Common myeloid progenitor, CD34-positive (primary cell): ENCODE measurements at regions of chr10 and their contacts with region 1.

Region 1: GRCh38 chr10:111076191-111076681 is 593 bp upstream of the ADRA2A start:
- DNase-seq: peak; percentile 64 to 85 (median 83)
- H3K4me3 ChIP-seq: peak overlapping the region; percentile 23 to 82 (median 63)
- H3K27ac ChIP-seq: no peak overlapping the region
- H3K4me1 ChIP-seq: peaks cover 0 to 30% (median 24%) of the 10 kb centered on the region in 4 experiments
- H3K27me3 ChIP-seq: peaks cover 6 to 43% (median 36%) of the 10 kb centered on the region in 5 experiments

Region 2: GRCh38 chr10:111063471-111063870 is 12.8 kb before region 1 on chr10:
- CTCF ChIA-PET with region 1: interaction called, 18 read pairs
- POLR2A ChIA-PET with region 1: no interaction called
- DNase-seq: no peak
- H3K4me3 ChIP-seq: no peak overlapping the region
- H3K27ac ChIP-seq: no peak overlapping the region
- H3K4me1 ChIP-seq: no peaks in the 10 kb centered on the region
- H3K27me3 ChIP-seq: peaks cover 0 to 8% (median 0%) of the 10 kb centered on the region in 5 experiments

Region 3: GRCh38 chr10:111128331-111129180 is 52.3 kb after region 1 on chr10:
- CTCF ChIA-PET with region 1: interaction called, 35 read pairs
- POLR2A ChIA-PET with region 1: interaction called, 4 read pairs
- DNase-seq: peak; percentile 78 to 93 (median 88)
- H3K4me3 ChIP-seq: no peak overlapping the region
- H3K27ac ChIP-seq: no peak overlapping the region
- H3K4me1 ChIP-seq: peaks cover 0 to 29% (median 6%) of the 10 kb centered on the region in 4 experiments
- H3K27me3 ChIP-seq: no peaks in the 10 kb centered on the region

Region 4: GRCh38 chr10:111200505-111201186 is 124.4 kb after region 1 on chr10:
- CTCF ChIA-PET with region 1: interaction called, 237 read pairs
- POLR2A ChIA-PET with region 1: interaction called, 3 read pairs
- DNase-seq: no peak
- H3K4me3 ChIP-seq: no peak overlapping the region
- H3K27ac ChIP-seq: no peak overlapping the region
- H3K4me1 ChIP-seq: no peaks in the 10 kb centered on the region
- H3K27me3 ChIP-seq: no peaks in the 10 kb centered on the region

Region 5: GRCh38 chr10:111221682-111222480 is 145.6 kb after region 1 on chr10:
- CTCF ChIA-PET with region 1: interaction called, 12 read pairs
- POLR2A ChIA-PET with region 1: no interaction called
- DNase-seq: no peak
- H3K4me3 ChIP-seq: no peak overlapping the region
- H3K27ac ChIP-seq: no peak overlapping the region
- H3K4me1 ChIP-seq: no peaks in the 10 kb centered on the region
- H3K27me3 ChIP-seq: peaks cover 2 to 14% (median 8%) of the 10 kb centered on the region in 5 experiments

Region 6: GRCh38 chr10:111578076-111578475 is 501.8 kb after region 1 on chr10:
- CTCF ChIA-PET with region 1: no interaction called
- POLR2A ChIA-PET with region 1: no interaction called
- DNase-seq: no peak
- H3K4me3 ChIP-seq: no peak overlapping the region
- H3K27ac ChIP-seq: no peak overlapping the region
- H3K4me1 ChIP-seq: no peaks in the 10 kb centered on the region
- H3K27me3 ChIP-seq: no peaks in the 10 kb centered on the region